Keratinocyte (primary cell): ENCODE measurements at regions of chr1 and their contacts with region 1.

Region 1: DNA sequence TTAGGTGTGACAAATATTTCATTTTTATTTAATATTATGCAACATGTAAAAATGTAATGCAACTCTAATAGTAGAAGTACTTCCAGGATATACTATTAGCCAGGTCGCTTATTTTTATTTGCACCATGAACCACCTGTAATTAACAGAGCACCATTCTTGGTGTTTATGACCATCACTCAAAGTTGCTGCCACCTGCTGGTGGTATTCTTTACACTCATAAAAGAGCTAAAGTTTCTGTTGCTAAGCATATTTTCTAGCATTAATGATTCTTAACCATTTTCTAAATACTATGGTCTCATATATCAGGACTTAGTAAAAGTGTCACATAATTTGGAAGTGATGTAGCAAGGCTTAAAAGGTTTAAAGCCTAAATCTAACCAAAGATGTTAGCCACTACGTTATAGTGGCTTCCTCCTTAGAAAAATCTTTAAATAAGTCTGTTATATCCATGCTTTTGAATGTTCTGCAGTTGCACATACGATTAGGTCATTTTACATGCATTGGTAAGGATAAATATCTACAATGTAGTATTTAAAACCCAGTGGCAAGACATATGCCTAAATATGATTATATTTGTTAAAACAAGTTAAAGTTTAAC is 244.5 kb downstream of the NEGR1 start:
- DNase-seq: peak; percentile 13
- H3K4me3 ChIP-seq: no peak overlapping the region
- H3K27ac ChIP-seq: no peak overlapping the region
- H3K4me1 ChIP-seq: no peaks in the 10 kb centered on the region
- H3K27me3 ChIP-seq: no peaks in the 10 kb centered on the region
- CTCF ChIP-seq: peak in 2 of 3 experiments; percentile 51 to 58

Region 2: DNA sequence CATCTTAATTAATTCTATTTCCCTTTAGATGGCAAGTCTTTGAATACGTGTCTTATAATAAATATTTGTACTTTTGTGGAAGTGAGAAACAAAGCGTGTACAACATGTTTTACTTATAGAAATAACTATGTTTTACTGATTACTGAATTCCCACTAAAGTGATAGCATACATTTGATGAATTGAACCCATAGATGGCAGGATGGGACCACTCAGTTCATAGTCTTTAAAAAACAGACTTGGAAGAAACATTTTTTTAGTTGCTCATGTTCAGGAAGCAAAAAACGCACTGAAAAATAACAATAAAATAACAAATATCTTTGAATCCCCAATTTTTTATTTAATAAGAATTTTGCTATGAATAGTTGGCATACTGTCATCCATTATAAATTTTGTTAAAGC is 449.9 kb before region 1 on chr1:
- dilution Hi-C with region 1: loop called (anchors 25 kb)
- DNase-seq: no peak
- H3K4me3 ChIP-seq: no peak overlapping the region
- H3K27ac ChIP-seq: no peak overlapping the region
- H3K4me1 ChIP-seq: no peaks in the 10 kb centered on the region
- H3K27me3 ChIP-seq: no peaks in the 10 kb centered on the region
- CTCF ChIP-seq: peak in 2 of 3 experiments; percentile 20 to 21

Region 3: DNA sequence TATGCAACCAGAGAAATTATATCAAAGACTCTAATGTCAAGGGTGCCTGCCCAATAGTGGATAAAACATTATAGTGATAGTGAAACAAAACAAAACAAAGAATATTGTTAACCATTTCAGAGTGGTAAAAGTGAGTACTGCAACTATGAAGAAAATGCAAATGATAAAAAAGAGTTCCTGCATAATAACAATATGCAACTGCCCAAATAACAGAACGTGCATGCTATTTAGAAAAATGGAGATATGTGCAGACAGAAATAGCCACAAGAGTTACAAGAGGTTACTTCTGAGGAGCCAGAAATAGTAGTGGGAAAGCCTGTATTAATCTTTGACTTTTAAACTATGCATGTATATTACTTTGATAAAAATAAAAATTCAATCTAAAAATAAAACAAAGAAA is 58.0 kb before region 1 on chr1:
- dilution Hi-C with region 1: no loop called
- DNase-seq: no peak
- H3K4me3 ChIP-seq: no peak overlapping the region
- H3K27ac ChIP-seq: no peak overlapping the region
- H3K4me1 ChIP-seq: no peaks in the 10 kb centered on the region
- H3K27me3 ChIP-seq: no peaks in the 10 kb centered on the region
- CTCF ChIP-seq: no peak